SK-N-SH (cell line): ENCODE measurements at regions of chr22 and their contacts with region 1.

Region 1: DNA sequence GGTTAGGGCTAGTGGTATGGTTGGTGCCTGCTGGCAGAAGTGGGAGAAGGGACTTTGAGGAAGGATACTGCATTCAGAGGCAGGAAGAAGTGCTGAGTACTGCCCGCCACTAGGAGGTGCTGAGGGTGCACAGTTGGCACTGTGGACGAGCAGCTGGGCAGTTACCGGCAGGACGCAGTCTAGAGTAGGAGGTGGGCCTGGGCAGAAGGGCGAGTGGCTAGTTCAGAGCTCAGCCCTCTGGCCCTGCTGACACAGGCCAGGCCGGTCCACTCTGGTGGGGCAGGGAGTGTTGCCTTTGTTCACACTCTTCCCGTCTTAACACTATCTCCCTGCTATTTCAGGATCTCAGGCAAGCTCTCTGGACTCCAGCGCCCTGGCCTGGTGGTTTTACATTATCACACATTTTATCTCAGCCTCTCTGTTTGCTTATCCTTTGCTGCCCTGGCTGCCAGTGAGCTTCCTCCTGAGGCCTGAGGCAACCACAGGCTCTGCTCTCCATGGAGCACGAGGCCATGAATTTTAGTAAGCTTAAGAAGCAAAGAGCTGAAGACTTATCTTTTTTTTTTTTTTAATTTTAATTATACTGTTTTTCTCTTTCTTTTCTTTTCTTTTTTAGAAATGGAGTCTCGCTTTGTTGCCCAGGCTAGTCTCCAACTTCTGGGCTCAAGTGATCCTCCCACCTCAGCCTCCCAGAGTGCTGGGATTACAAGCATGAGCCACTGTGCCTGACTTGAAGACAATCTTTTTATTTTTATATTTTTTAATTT is 26.9 kb downstream of the SNAP29 start:
- DNase-seq: peak; percentile 84
- H3K4me3 ChIP-seq: peak overlapping the region in 1 of 2 experiments; percentile 27; a peak in 2 of 4 replicates
- H3K27ac ChIP-seq: peak overlapping the region; percentile 59 to 95
- H3K4me1 ChIP-seq: peaks cover 0 to 33% of the 10 kb centered on the region in 2 experiments; a peak in 1 of 4 replicates
- H3K27me3 ChIP-seq: no peaks in the 10 kb centered on the region
- CTCF ChIP-seq: peak; percentile 91
- EP300 ChIP-seq: peak in 1 of 2 experiments; percentile 68; a peak in 1 of 4 replicates
- RAD21 ChIP-seq: peak; percentile 88

Region 2: DNA sequence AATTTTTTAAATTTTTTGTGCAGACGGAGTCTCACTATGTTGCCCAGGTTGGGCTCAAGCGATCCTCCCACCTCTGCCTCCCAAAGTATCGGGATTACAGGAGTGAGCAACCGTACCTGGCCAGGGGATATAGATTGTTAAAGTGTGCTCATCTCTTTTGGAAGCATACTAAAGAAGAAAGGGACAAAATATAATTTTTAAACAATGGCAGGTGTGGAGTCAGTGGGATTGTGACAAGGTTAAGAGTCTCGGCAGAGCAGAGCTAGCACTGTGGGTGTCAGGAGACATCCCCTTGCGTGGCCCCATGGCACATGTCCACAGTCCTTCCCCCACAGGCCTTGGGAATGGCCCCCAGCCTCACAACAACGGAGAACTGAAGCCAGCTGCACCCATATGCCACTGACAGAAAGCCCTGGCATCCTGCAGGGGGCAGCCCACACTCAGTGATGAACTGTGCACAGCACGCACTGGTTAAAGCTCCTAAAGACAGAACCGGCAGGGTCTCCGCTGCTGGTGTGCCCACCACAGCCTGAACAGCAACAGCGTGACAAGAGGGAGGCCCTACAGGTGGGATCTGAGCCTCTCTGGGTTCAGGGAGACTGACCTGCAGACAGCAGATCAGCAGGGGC is 81.9 kb before region 1 on chr22:
- CTCF ChIA-PET with region 1: interaction called, 31 read pairs
- POLR2A ChIA-PET with region 1: interaction called, 5 read pairs
- DNase-seq: peak; percentile 71
- H3K4me3 ChIP-seq: peak overlapping the region in 1 of 2 experiments; percentile 39; a peak in 1 of 4 replicates
- H3K27ac ChIP-seq: no peak overlapping the region
- H3K4me1 ChIP-seq: peaks cover 8 to 17% of the 10 kb centered on the region in 2 experiments; a peak in 2 of 4 replicates
- H3K27me3 ChIP-seq: no peaks in the 10 kb centered on the region
- CTCF ChIP-seq: peak; percentile 65
- EP300 ChIP-seq: no peak
- RAD21 ChIP-seq: peak; percentile 81

Region 3: DNA sequence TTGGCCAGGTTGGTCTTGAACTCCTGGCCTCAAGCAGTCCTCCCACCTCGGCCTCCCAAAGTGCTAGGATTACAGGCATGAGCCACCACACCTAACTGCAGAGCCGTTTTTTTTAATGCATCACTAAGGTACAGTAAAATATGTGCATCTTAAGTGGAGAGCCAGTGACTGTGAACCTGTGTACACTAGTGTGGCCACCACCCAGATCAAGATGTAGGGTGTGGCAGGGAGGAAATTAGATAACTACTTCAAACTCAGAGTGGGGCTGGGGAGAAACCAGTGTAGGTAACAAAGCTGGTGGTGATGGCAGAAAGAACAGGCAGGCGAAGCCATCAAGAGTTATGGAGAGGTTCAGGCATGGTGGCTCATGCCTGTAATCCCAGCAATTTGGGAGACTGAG is 12.5 kb before region 1 on chr22:
- CTCF ChIA-PET with region 1: interaction called, 19 read pairs
- POLR2A ChIA-PET with region 1: interaction called, 15 read pairs
- DNase-seq: no peak
- H3K4me3 ChIP-seq: no peak overlapping the region
- H3K27ac ChIP-seq: no peak overlapping the region
- H3K4me1 ChIP-seq: peaks cover 0 to 8% of the 10 kb centered on the region in 2 experiments; a peak in 2 of 4 replicates
- H3K27me3 ChIP-seq: no peaks in the 10 kb centered on the region
- CTCF ChIP-seq: no peak
- EP300 ChIP-seq: no peak
- RAD21 ChIP-seq: no peak

Region 4: DNA sequence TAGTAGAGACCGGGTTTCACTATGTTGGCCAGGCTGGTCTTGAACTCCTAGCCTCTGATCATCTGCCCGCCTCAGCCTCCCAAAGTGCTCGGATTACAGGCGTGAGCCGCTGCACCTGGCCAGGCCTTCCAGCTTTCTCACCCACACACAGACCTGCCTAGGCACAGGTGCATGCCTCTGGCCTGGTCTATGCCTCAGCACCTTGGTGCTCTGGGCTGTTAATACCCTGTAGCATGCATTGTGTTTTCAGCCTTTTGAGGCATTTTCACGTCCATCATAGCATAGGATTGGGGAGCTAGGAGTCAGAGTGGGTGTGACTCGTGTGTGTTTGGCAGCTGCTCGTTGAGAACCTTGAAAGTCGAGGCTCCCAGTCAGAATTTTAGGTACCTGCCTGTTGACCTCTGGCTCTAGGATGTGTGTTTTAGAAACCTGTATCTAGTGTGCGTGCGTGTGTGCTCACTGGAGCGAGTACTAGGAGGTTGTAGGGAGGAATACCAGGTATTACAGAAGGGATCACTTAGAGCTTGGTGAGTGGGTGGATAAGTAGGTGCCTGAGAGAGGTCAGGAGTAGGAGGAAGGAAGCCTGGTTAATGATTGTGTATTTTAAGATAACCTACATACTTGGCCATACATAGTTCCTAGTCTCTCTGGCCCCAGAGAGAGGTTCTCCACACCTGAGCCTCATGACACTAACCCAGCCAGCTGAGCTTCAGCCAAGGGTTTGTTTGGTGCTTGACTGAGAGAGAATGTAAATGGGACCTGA is 51.5 kb after region 1 on chr22:
- CTCF ChIA-PET with region 1: interaction called, 10 read pairs
- POLR2A ChIA-PET with region 1: no interaction called
- DNase-seq: no peak
- H3K4me3 ChIP-seq: no peak overlapping the region
- H3K27ac ChIP-seq: no peak overlapping the region
- H3K4me1 ChIP-seq: peaks cover 5 to 13% of the 10 kb centered on the region in 2 experiments; a peak in 2 of 4 replicates
- H3K27me3 ChIP-seq: no peaks in the 10 kb centered on the region
- CTCF ChIP-seq: no peak
- EP300 ChIP-seq: no peak
- RAD21 ChIP-seq: no peak

Region 5: DNA sequence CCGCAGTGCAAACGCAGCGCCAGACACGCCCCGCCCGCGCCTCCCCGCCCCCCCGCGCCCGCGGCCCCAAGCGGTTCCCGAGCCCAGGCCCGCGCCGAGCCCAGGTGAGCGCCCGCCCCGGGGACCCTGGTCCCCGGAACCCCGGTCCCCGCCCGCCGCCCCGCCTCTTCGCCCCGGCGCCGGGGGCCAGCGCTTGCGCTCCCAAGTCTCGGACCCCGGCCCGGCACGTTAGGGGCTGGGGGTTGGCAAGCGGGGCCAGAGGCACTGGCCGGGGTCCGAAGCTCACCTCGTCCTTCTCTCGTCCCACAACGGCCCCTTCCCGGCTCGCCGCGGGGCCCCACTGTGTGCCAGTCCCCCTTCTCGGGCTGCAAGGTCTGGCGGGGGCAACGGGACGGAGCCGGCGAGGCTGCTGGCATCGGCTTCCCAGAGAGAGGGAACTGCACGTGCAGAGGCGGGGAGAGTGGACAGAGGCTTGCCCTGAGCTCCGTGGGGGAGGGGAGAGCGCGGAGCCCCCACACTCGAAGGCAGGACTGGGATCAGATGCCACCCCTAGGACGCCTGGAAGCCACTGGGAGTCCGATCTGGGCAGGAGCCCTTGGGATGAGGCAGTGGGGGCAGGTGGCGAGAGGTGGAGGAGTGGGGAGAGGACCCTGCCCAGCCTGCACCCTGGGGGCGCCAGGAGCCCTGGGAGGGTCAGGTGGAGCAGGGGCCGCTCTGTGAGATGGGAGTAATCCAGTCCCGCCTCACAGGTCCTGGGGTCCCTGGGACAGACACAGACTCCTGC is 79.6 kb after region 1 on chr22:
- CTCF ChIA-PET with region 1: interaction called, 16 read pairs
- POLR2A ChIA-PET with region 1: no interaction called
- DNase-seq: peak; percentile 79
- H3K4me3 ChIP-seq: peak overlapping the region; percentile 46 to 51; a peak in 2 of 4 replicates
- H3K27ac ChIP-seq: no peak overlapping the region
- H3K4me1 ChIP-seq: peaks cover 0 to 26% of the 10 kb centered on the region in 2 experiments; a peak in 1 of 4 replicates
- H3K27me3 ChIP-seq: no peaks in the 10 kb centered on the region
- CTCF ChIP-seq: no peak
- EP300 ChIP-seq: no peak
- RAD21 ChIP-seq: no peak

Region 6: DNA sequence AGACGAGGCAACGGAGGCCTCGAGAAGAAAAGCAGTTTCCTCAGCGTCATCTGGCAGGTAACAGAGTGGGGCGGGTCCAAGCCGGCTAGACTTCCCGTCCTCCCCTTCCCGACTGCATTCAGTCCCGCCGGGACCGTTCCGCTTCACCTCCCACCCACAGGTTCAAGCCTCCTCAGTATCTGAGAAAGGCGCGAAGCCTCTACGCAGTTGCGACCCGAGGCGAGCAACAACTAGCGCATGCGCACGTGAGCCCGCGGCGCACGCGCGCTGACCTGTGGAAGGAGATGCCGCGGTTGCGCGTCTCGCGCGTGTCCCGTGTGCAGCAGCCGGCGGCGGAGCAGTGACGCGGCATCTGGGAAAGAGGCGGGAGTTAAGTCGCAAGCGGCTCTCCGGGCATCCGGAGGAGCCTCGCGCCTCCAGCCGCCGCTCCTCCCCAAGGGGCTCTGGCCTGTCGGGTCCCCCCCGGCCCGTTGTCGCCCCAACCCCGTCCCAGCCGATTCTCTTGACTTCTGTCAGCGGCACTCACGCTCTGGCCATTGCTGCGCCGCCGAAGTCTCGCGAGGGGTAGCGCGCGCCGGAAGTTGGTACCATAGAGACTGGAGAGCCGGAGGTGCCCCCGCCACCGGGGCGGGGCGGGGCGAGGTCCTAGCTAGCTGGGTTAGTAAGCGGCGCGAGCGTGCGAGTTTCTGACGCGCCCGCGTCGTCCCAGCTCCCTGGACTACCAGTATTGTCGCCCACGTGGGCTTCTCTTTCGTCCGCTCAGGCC is 116.0 kb after region 1 on chr22 and contains the start of gene THAP7:
- CTCF ChIA-PET with region 1: interaction called, 13 read pairs
- POLR2A ChIA-PET with region 1: interaction called, 5 read pairs
- DNase-seq: peak; percentile 96
- H3K4me3 ChIP-seq: peak within 1 kb of the TSS; percentile 82 to 96
- H3K27ac ChIP-seq: peak within 1 kb of the TSS; percentile 96 to 97
- H3K4me1 ChIP-seq: peaks cover 12 to 37% of the 10 kb centered on the region in 2 experiments; a peak in 3 of 4 replicates
- H3K27me3 ChIP-seq: no peaks in the 10 kb centered on the region
- CTCF ChIP-seq: no peak
- EP300 ChIP-seq: no peak
- RAD21 ChIP-seq: no peak
- polyA plus RNA-seq, gene THAP7: 26.3 and 32.0 TPM in 2 replicates